ENCODE measurements at regions of chr12 and their contacts with region 1.

Region 1: GRCh38 chr12:57899010-57899662 is 42.2 kb upstream of the ATP23 start:
- DNase-seq: peak; percentile 74
- ATAC-seq: peak; percentile 84
- H3K4me3 Mint-ChIP-seq: peak overlapping the region; percentile 61
- H3K27ac Mint-ChIP-seq: peak overlapping the region; percentile 95
- H3K4me1 Mint-ChIP-seq: peaks cover 46% of the 10 kb centered on the region
- H3K27me3 Mint-ChIP-seq: peaks cover 2% of the 10 kb centered on the region

Region 2: GRCh38 chr12:57576613-57577160 is 322.4 kb before region 1 on chr12:
- CTCF ChIA-PET with region 1: no interaction called
- POLR2A ChIA-PET with region 1: no interaction called
- DNase-seq: no peak
- ATAC-seq: no peak
- H3K4me3 Mint-ChIP-seq: no peak overlapping the region
- H3K27ac Mint-ChIP-seq: no peak overlapping the region
- H3K4me1 Mint-ChIP-seq: no peaks in the 10 kb centered on the region
- H3K27me3 Mint-ChIP-seq: no peaks in the 10 kb centered on the region

Region 3: DNA sequence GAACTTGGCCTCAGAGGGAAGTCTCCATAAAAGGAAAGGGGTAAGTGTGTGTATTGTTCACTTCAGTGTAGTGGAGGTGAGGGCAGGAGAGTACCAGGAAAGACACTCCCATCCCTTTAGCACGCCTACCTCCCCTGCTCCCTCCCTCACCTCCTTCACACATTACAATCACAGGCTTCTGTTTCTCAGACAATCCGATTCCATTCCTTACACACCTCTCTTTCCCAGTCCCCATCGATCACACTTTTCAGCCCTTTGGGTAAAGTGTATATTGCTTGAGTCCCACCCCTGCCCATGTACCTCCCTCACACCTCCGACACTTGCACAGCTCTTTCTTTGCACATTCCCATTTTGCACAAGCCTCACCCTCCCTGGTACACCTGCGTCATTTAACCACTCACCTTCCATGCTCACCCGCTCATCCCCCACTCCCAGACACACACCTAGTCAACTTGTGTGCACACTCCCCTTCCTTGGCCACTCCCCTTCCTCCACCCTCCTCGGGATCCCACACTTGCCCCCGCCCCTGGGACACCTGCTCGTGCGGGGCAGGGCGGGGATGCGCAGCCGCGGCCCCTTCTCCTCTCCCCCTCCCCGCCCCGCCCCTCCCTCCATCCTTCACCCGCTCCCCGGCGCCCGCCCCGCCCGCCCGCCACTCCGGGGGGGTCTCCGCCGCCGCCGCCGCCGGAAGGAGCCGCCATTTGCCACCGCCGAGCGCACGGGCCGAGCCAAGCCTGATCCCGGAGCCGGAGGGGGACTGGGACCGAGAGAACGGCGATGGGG is 144.5 kb before region 1 on chr12 and contains the start of gene MARCHF9:
- CTCF ChIA-PET with region 1: interaction called, 46 read pairs
- POLR2A ChIA-PET with region 1: no interaction called
- DNase-seq: peak; percentile 90
- ATAC-seq: peak; percentile 46
- H3K4me3 Mint-ChIP-seq: peak within 1 kb of the TSS; percentile 80
- H3K27ac Mint-ChIP-seq: peak within 1 kb of the TSS; percentile 81
- H3K4me1 Mint-ChIP-seq: peaks cover 54% of the 10 kb centered on the region
- H3K27me3 Mint-ChIP-seq: no peaks in the 10 kb centered on the region
- total RNA-seq, gene MARCHF9: 23.6 to 24.4 TPM

Region 4: GRCh38 chr12:57803319-57803893 is 95.7 kb before region 1 on chr12:
- CTCF ChIA-PET with region 1: interaction called, 128 read pairs
- POLR2A ChIA-PET with region 1: no interaction called
- DNase-seq: peak; percentile 49
- ATAC-seq: no peak
- H3K4me3 Mint-ChIP-seq: no peak overlapping the region
- H3K27ac Mint-ChIP-seq: no peak overlapping the region
- H3K4me1 Mint-ChIP-seq: no peaks in the 10 kb centered on the region
- H3K27me3 Mint-ChIP-seq: no peaks in the 10 kb centered on the region

Region 5: DNA sequence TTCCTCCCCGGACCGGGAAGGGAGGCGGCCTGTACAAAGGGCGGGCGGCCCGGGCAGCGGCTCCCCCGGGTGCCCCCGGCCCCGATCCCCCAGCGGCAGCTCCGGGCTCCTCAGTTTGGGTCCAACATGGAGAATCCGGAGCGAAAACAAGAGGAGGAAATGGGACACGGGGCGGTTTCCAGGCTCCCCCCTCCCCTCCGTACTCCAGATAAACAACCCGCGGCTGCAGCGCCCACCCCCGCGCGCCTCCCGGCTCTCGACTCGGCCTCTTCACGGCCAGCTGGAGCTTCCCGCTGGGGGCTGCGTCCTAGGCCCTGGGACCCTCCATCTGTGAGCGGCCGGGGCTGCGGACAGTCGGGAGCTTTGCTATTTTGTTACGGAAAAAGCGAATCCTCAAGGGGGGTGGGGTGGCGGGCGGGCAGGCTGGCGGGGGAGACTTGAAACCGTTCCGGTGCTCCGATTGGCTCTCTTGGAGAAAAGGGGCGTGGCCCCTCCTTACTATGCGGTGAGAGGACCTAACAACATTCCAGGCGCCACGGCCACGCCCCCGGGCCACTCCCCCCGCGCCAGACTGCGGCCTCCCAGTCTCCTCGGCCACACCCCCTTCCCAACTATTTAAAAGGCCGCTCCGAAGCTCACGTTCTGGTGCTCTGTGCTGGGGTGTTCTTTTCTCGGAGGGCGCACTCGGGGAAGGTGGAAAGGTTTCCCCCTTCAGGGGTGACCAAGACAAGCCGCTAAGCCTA is 52.4 kb before region 1 on chr12 and contains the start of gene CTDSP2:
- CTCF ChIA-PET with region 1: interaction called, 91 read pairs
- POLR2A ChIA-PET with region 1: interaction called, 20 read pairs
- DNase-seq: peak; percentile 89
- ATAC-seq: peak; percentile 56
- H3K4me3 Mint-ChIP-seq: peak within 1 kb of the TSS; percentile 81
- H3K27ac Mint-ChIP-seq: peak within 1 kb of the TSS; percentile 66
- H3K4me1 Mint-ChIP-seq: peaks cover 43% of the 10 kb centered on the region
- H3K27me3 Mint-ChIP-seq: peaks cover 27% of the 10 kb centered on the region
- total RNA-seq, gene CTDSP2: 100 to 114 TPM

Region 6: GRCh38 chr12:57888409-57889157 is 10.6 kb before region 1 on chr12:
- CTCF ChIA-PET with region 1: interaction called, 57 read pairs
- POLR2A ChIA-PET with region 1: interaction called, 10 read pairs
- DNase-seq: peak; percentile 38
- ATAC-seq: peak; percentile 65
- H3K4me3 Mint-ChIP-seq: no peak overlapping the region
- H3K27ac Mint-ChIP-seq: no peak overlapping the region
- H3K4me1 Mint-ChIP-seq: peaks cover 8% of the 10 kb centered on the region
- H3K27me3 Mint-ChIP-seq: peaks cover 6% of the 10 kb centered on the region

Measured in activated CD8-positive, alpha-beta T cell treated with anti-CD3 and anti-CD28 coated beads, Interleukin-2, amount 10 ng/mL, durations not matched to agents 7 days and 5 days (primary cell).